ENCODE measurements at regions of chr17 and their contacts with region 1.

Region 1: DNA sequence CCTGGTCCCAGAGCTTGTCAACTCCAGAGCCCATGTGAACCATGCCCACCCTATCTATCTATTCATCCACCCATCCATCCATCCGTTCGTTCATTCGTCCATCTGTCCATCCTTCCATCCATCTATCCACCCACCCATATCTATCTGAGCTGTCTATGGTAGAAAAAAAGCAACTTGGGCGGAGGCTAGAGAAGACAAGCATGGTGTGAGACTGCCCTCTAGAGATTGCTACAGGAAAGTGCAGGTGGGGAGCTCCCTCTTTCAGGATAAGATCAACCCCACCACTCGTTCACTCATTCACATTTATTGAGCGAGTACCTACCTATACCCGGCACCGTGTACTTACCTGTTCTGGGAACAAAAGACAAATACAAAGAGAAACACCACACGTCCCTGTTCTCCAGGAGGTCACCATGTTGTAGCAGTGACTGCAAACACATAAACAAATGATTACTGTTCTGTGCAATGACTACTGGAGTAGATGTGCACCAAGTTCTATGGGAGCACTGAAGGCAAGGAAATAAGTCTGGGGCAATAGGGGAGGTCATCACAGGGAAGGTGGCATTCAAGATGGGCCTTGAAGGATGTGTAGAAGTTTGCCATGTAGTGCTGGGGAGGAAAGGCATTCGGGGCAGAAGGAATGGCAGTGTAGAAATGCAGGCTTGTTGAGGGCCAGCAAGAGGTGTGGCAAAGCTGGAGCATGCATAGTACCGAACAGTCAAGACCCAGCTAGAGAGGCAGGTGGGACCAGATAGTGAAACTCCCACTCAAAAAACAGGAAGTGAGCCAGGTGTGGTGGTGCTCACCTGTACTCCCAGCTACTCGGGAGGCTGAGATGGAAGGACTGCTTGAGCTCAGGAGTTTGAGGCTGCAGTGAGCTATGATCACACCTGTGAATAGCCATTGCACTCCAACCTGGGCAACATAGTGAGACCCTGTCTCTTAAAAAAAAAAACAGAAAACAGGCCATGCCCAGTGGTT is 13.4 kb upstream of the ATP5MC1 start:
- DNase-seq: peak; percentile 91
- ATAC-seq: peak; percentile 88
- H3K4me3 ChIP-seq: no peak overlapping the region
- H3K27ac ChIP-seq: no peak overlapping the region
- H3K4me1 ChIP-seq: no peaks in the 10 kb centered on the region
- H3K27me3 ChIP-seq: no peaks in the 10 kb centered on the region
- CTCF ChIP-seq: peak; percentile 99

Region 2: DNA sequence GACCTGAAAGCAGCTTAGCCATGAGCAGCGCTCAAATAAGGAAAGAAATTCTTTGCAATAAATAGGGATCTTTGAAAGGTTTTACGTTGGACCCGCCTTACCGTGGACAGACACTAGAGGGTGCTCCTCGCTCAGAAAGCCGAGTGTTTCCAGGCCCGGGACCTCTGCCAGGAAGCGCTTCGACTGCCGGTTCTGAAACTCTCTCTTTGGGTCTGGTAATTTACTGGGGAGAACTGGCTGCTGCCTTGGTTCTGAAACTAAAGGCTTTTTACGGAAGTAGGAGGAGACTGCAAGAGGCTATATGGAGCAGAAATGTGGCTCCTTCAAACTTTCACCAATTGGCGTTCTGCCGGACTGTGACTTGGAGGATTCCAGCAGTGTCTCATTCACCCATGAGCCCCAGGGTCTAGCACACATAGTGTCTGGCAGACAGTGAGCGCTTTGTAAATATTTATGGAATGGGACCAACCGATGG is 207.5 kb before region 1 on chr17:
- CTCF ChIA-PET with region 1: interaction called, 23 read pairs
- POLR2A ChIA-PET with region 1: interaction called, 3 read pairs
- intact Hi-C with region 1: loop called (anchors 1 kb)
- DNase-seq: peak; percentile 95
- ATAC-seq: peak; percentile 72
- H3K4me3 ChIP-seq: peak overlapping the region; percentile 64
- H3K27ac ChIP-seq: no peak overlapping the region
- H3K4me1 ChIP-seq: peaks cover 5% of the 10 kb centered on the region; the same call in 1 of the 2 replicates
- H3K27me3 ChIP-seq: no peaks in the 10 kb centered on the region
- CTCF ChIP-seq: peak; percentile 96

Region 3: DNA sequence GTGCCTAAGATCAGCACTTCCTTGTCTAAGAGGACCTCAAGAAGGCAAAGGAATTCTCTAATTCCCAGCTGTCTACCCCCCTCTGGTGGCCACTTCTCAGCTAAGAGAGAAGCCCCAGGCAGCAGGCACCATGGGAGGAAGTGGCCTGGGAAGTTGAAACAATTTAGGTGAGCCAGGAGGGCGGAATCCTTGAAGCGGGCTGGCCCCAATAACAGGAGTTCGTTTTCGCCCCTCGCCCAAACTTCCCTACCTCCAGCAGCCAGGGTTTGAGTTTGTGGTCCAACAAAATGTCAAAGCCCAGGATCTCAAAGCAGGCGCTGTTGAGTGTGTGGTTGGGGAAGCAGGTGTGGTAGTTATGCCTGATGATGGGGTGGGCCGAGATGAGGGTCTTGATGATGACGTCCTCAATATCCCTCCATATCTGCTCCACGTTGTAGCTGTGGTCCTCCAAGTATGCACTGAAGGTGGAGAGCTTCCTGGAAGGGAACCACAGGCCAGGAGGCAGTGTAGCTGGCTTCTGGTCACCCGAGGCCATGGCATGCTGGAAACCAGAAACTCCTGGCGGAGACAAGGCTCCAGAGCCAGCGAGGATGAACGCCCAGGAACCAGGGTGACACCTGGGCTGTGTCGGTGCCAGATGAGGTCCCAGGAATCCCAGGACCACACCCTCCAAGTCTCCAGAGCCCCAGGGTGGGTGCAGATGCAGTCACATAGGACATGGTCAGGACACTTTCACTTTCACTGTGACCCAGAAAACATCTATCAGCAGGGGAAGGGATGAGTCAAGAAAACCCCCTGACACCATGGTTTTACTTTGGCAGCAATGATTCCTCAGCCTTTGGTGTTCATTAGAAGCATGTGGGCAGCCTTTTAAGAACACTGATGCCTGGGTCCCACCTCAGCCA is 87.8 kb before region 1 on chr17:
- CTCF ChIA-PET with region 1: interaction called, 15 read pairs
- POLR2A ChIA-PET with region 1: no interaction called
- intact Hi-C with region 1: no loop called
- DNase-seq: peak; percentile 99
- ATAC-seq: peak; percentile 92
- H3K4me3 ChIP-seq: peak overlapping the region; percentile 19; the same call in 1 of the 2 replicates
- H3K27ac ChIP-seq: no peak overlapping the region
- H3K4me1 ChIP-seq: peaks cover 30% of the 10 kb centered on the region
- H3K27me3 ChIP-seq: no peaks in the 10 kb centered on the region
- CTCF ChIP-seq: peak; percentile 98

Region 4: GRCh38 chr17:48816774-48817590 is 62.2 kb before region 1 on chr17 and contains the start of gene TTLL6:
- CTCF ChIA-PET with region 1: interaction called, 51 read pairs
- POLR2A ChIA-PET with region 1: no interaction called
- intact Hi-C with region 1: loop called (anchors 1 kb)
- DNase-seq: peak; percentile 98
- ATAC-seq: peak; percentile 96
- H3K4me3 ChIP-seq: peak within 1 kb of the TSS; percentile 65
- H3K27ac ChIP-seq: no peak within 1 kb of the TSS
- H3K4me1 ChIP-seq: peaks cover 12% of the 10 kb centered on the region
- H3K27me3 ChIP-seq: no peaks in the 10 kb centered on the region
- CTCF ChIP-seq: no peak
- total RNA-seq, gene TTLL6: 0.29 and 0.40 TPM in 2 replicates

Region 5: DNA sequence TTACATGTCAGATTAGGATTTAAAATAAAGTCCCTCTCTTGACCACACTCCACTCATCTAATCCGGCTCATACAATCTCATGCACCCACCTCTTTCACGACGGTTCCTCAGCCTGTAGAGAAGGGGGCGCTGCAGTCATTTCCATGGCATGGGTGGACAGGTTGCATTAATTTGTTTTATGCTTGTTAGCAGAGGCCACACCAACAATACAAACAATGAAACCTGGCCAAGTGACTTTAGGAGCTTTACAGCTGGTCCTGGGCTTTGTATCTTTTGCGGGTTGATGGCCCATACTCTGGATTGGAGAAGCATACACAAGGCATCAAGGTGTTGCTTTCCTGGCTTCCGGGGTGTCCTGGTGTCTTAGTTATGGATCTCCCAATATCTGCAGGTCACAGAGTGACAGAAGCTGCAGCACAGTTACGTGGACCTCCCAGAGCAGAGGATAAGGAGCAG is 75.1 kb after region 1 on chr17:
- CTCF ChIA-PET with region 1: no interaction called
- POLR2A ChIA-PET with region 1: no interaction called
- intact Hi-C with region 1: no loop called
- DNase-seq: peak; percentile 81
- ATAC-seq: peak; percentile 97
- H3K4me3 ChIP-seq: no peak overlapping the region
- H3K27ac ChIP-seq: no peak overlapping the region
- H3K4me1 ChIP-seq: peaks cover 4% of the 10 kb centered on the region; the same call in 1 of the 2 replicates
- H3K27me3 ChIP-seq: no peaks in the 10 kb centered on the region
- CTCF ChIP-seq: peak; percentile 92

Region 6: DNA sequence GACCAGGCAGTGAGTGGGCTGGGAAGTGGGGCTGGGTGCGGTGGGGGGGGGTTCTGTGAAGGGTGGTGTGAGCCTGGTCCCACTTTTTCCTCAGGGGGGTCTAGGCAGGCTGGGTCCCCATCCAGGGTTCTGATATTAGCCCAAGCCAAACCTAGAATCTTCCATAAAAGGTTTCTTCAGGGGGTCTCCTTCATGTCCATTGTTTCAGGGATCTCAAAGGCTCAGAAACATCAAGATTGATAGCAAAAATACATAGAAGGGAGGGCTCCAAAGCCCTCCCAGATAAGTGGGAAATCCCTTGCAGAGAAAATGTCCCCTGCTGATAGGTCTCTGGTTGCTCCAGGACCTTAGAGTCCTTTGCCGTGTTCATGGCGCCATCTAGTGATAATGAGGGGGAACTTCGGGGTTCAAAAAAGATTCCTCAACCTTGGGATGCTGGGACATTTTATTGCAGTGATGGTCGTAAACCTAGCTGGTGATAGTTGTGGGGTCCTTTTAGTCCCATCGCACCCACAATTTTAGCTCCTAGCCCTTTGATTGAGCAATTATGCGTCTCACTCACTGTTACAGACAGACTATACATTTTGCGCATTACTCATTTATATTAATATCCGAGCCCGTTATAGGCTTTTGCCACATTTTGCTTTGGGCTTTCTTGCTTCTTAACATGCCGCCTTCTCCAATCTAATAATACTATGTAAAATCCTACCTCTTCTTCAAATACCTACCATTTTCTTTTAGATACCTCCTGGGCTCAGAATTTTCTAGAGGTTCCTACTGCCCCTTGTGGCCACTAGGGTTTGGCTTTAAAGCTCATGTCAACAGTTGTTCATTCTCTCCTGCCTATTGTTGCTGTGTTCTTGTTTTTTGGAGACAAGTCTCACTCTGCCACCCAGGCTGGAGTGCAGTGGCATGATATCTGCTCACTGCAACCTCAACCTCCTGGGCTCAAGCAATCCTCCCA is 153.0 kb after region 1 on chr17:
- CTCF ChIA-PET with region 1: interaction called, 13 read pairs
- POLR2A ChIA-PET with region 1: no interaction called
- intact Hi-C with region 1: loop called (anchors 2 kb)
- DNase-seq: peak; percentile 94
- ATAC-seq: peak; percentile 87
- H3K4me3 ChIP-seq: peak overlapping the region; percentile 46; the same call in 1 of the 2 replicates
- H3K27ac ChIP-seq: no peak overlapping the region
- H3K4me1 ChIP-seq: peaks cover 7% of the 10 kb centered on the region
- H3K27me3 ChIP-seq: no peaks in the 10 kb centered on the region
- CTCF ChIP-seq: peak; percentile 88